AG04449 (cell line): ENCODE measurements at regions of chr2 and their contacts with region 1.

Region 1: GRCh38 chr2:208175069-208175839 is 11.9 kb upstream of the CRYGA start:
- DNase-seq: peak; percentile 17
- H3K4me3 ChIP-seq: no peak overlapping the region
- CTCF ChIP-seq: peak; percentile 82

Region 2: DNA sequence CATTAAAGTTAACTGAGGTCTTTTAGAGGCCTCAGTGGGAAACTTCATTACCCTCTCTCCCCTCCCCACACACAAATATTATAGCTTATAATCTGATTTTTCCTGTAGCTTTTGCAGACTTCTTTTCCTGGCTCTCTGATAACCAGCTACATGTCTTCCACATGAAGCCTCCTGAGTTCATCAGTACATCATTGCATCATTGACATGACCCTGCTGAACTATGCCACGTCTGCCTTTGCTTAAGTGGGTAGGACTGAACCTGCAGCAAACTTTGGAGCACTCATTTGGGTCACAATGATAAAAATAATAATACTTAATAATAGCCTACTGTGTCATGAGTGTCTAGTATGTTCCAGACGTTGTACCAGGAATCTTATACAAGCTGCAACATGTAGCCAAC is 18.8 kb before region 1 on chr2:
- CTCF ChIA-PET with region 1: interaction called, 11 read pairs
- POLR2A ChIA-PET with region 1: no interaction called
- DNase-seq: no peak
- H3K4me3 ChIP-seq: no peak overlapping the region
- CTCF ChIP-seq: no peak

Region 3: GRCh38 chr2:208192612-208193236 is 17.5 kb after region 1 on chr2:
- CTCF ChIA-PET with region 1: interaction called, 12 read pairs
- POLR2A ChIA-PET with region 1: no interaction called
- DNase-seq: no peak
- H3K4me3 ChIP-seq: no peak overlapping the region
- CTCF ChIP-seq: no peak

Region 4: GRCh38 chr2:208245746-208246145 is 70.5 kb after region 1 on chr2:
- CTCF ChIA-PET with region 1: interaction called, 12 read pairs
- POLR2A ChIA-PET with region 1: no interaction called
- DNase-seq: no peak
- H3K4me3 ChIP-seq: no peak overlapping the region
- CTCF ChIP-seq: no peak

Region 5: GRCh38 chr2:208265801-208266552 is 90.7 kb after region 1 on chr2 and contains the start of gene PIKFYVE:
- CTCF ChIA-PET with region 1: interaction called, 12 read pairs
- POLR2A ChIA-PET with region 1: no interaction called
- DNase-seq: peak; percentile 86
- H3K4me3 ChIP-seq: peak within 1 kb of the TSS; percentile 89
- CTCF ChIP-seq: no peak